ENCODE measurements at regions of chr7 and their contacts with region 1.

Region 1: GRCh38 chr7:101273206-101273605 is 28.3 kb upstream of the FIS1 start:
- DNase-seq: no peak
- H3K4me3 ChIP-seq: no peak overlapping the region
- H3K27ac ChIP-seq: no peak overlapping the region
- H3K4me1 ChIP-seq: no peaks in the 10 kb centered on the region
- H3K27me3 ChIP-seq: no peaks in the 10 kb centered on the region
- CTCF ChIP-seq: no peak

Region 2: DNA sequence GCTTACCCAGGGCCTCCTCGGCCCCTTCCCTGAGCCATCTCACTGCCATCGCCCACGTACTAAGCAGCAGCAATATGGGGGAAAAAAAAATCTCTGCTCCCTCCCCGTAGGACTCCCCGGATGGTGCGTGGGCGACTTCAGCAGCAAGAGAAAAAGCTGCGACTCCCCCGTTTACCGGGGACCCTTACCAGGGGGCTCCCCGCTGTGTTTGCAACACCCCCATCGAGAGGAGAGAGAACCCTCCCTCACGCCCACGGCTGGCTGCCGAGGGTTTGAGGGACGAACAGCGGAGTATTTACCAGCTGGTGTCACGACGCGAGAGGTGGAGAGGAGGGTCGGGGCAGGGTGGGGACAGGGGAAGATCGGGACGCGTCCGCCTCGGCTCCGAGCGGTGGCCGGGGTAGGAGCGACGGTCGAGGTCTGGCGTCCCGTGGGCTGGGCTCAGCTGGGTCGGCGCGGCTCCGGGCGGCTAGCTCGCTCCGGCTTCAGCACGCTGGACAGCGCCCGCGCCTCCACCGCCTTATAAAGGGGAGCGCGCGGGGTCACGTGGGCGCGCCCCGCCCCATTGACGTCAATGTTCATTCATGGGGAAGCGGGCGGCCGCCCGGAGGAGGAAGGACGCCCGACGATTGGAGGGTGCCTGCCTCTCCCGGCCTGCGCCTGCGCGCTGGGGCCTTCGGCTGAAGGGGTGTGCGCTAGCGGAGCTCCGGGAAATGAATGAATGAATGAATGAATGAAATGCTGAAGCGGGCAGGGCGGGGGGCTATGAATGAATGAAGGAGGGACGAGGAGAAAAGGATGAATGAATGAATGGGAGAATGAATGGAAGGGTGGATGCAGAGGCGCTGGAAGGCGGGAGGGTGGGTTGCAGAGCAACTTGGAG is 107.9 kb before region 1 on chr7 and contains the start of gene VGF:
- CTCF ChIA-PET with region 1: no interaction called
- dilution Hi-C with region 1: loop called (anchors 10 kb)
- in situ Hi-C with region 1: no loop called
- intact Hi-C with region 1: no loop called
- DNase-seq: peak; percentile 91
- H3K4me3 ChIP-seq: peak within 1 kb of the TSS; percentile 18 to 49 (median 47)
- H3K27ac ChIP-seq: no peak within 1 kb of the TSS
- H3K4me1 ChIP-seq: peaks cover 48% of the 10 kb centered on the region
- H3K27me3 ChIP-seq: peaks cover 7% of the 10 kb centered on the region
- CTCF ChIP-seq: no peak
- total RNA-seq, gene VGF: 0.54 TPM in 1 of 2 donors, not detected in the other

Region 3: DNA sequence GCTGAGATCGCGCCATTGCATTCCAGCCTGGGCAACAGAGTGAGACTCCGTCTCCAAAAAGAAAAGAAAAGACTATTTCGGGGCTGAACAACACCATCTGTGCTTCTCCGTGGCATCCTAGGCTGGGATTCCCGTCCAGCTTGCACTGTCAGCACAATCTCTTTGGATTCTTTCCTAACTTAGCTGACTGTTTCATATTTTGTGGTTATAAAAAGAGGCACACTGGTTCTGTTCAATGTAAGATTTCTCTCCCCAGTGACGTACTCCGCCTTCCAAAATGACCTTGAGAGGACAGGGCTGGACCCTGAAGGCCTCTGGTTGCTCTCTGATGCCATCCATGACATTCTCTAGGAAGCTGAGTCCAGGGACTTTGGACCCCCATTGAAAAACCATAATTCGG is 46.5 kb before region 1 on chr7:
- CTCF ChIA-PET with region 1: no interaction called
- dilution Hi-C with region 1: no loop called
- in situ Hi-C with region 1: no loop called
- intact Hi-C with region 1: no loop called
- DNase-seq: no peak
- H3K4me3 ChIP-seq: no peak overlapping the region
- H3K27ac ChIP-seq: no peak overlapping the region
- H3K4me1 ChIP-seq: peaks cover 3% of the 10 kb centered on the region
- H3K27me3 ChIP-seq: no peaks in the 10 kb centered on the region
- CTCF ChIP-seq: no peak